ENCODE measurements at regions of chr6 and their contacts with region 1.

Region 1: GRCh38 chr6:142387997-142388815 is 86.4 kb downstream of the ADGRG6 start:
- DNase-seq: no peak
- H3K4me3 Mint-ChIP-seq: no peak overlapping the region
- H3K27ac Mint-ChIP-seq: no peak overlapping the region
- H3K4me1 Mint-ChIP-seq: no peaks in the 10 kb centered on the region
- H3K27me3 Mint-ChIP-seq: peaks cover 46% of the 10 kb centered on the region

Region 2: GRCh38 chr6:142301651-142302370 is 86.4 kb before region 1 on chr6 and contains the start of gene ADGRG6:
- intact Hi-C with region 1: loop called (anchors 5 kb)
- DNase-seq: no peak
- H3K4me3 Mint-ChIP-seq: peak within 1 kb of the TSS; percentile 70
- H3K27ac Mint-ChIP-seq: no peak within 1 kb of the TSS
- H3K4me1 Mint-ChIP-seq: no peaks in the 10 kb centered on the region
- H3K27me3 Mint-ChIP-seq: peaks cover 40% of the 10 kb centered on the region
- total RNA-seq, gene ADGRG6: not detected in 2 replicates

Region 3: DNA sequence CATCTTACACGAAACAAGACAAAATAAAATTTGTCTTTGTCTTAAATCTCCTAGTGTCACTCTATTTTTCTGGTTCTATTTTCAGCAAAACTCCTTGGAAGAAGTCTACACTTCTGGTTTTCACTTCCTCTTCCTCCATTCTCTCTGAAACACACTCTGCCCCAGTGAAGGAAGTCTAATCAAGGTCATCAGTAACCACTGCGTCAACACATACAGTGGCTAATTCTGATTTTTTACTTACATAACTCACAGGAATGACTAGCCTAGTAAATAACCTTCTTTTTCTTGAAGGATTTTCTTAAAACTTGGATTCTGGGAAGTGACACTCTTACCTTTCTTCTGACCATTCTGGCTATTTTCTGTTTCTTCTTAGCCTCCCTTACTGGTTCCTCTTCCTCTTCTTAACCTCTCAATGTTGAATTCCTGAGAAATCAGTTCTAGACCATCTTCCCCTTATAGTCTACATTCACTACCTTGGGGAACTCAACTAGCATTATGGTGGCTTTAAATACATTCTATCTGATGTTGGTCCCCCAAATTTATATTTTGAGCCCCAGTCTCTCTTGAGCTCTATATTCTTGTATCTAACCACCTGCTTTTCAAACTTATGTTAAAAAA is 710.0 kb after region 1 on chr6:
- intact Hi-C with region 1: no loop called
- DNase-seq: no peak
- H3K4me3 Mint-ChIP-seq: no peak overlapping the region
- H3K27ac Mint-ChIP-seq: no peak overlapping the region
- H3K4me1 Mint-ChIP-seq: no peaks in the 10 kb centered on the region
- H3K27me3 Mint-ChIP-seq: no peaks in the 10 kb centered on the region

Measured in activated T-helper 1 cell treated with anti-CD3 and anti-CD28 coated beads, Interleukin-12 subunit alpha, Interleukin-12 subunit beta, Interleukin-2, Interleukin-4 antibody, amounts not matched to agents 30 ng/mL and 10 ng/mL and 1 ng/mL, durations not matched to agents 14 hours and 24 hours and 36 hours (primary cell).